Right ventricle myocardium superior (tissue), 1 donor: ENCODE measurements at regions of chrX and their contacts with region 1.

Region 1: GRCh38 chrX:153763989-153764755 is at the start of gene PLXNB3:
- DNase-seq: peak; percentile 87
- ATAC-seq: peak; percentile 89
- total RNA-seq, gene PLXNB3: 1.5 TPM

Region 2: DNA sequence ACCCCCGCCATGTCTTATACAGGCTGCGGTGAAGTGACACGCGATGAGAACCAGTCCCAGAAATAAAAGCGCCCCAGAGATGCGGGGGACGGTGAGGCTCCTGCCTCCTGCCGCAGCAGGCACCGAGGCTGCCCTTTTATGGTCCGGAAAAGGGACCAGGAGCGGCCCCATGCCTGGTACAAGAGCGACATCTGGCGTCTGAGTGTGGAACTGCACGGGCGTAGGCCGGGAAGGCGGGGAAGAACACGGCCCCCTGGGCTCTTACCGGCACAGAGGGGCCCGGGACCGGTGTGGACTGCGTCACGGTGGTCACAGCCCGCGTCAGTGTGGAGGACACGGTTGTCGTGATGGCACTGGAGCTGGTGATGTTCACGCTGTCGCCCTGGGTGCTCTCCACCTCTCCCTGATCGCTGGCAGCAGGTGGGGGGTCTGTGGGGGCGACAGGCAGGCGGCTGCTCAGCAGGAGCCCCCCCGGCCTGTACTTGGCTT is 189.2 kb after region 1 on chrX:
- intact Hi-C with region 1: loop called (anchors 5 kb)
- DNase-seq: peak; percentile 78
- ATAC-seq: peak; percentile 83